ENCODE measurements at regions of chr5 and their contacts with region 1.

Region 1: DNA sequence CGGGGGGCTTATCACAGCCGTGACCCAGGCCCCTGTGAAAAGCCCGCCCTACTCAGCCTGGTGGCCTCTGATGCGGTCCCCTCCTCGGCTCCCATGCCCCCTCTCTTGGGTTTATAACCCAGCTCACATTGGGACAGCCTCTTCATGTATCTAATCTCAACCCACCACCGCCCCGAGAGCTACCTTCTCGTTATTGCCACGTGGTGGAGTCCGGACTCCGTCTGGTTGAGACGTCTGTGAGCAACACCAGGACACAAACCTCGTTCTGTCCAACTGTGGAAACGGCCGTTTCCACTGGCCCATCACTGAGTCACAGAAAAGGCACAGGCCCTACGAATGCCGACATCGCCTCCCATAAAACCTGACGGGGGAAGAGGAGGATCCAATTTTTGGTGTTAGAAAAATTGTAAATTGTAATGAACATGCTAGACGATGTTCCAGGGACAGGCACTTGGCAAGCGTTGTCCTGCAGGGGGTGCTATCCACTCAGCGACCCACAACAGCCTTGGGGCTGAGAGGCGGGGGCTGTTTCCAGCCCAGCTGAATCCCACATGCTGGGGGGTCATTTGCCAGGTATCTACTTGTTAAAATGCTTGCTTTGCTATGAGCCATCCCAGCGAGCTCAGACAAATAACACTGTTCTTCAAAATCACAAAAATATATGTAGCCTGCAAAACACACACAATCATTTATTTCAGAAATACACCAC is 37.3 kb upstream of the N4BP3 start:
- DNase-seq: peak; percentile 86

Region 2: GRCh38 chr5:177592010-177592834 is 483.8 kb before region 1 on chr5 and contains the start of gene TMED9:
- intact Hi-C with region 1: no loop called
- DNase-seq: peak; percentile 96
- total RNA-seq, gene TMED9: 94.9 TPM

Region 3: GRCh38 chr5:178146020-178146820 is 70.2 kb after region 1 on chr5:
- intact Hi-C with region 1: loop called (anchors 5 kb)
- DNase-seq: no peak

Region 4: DNA sequence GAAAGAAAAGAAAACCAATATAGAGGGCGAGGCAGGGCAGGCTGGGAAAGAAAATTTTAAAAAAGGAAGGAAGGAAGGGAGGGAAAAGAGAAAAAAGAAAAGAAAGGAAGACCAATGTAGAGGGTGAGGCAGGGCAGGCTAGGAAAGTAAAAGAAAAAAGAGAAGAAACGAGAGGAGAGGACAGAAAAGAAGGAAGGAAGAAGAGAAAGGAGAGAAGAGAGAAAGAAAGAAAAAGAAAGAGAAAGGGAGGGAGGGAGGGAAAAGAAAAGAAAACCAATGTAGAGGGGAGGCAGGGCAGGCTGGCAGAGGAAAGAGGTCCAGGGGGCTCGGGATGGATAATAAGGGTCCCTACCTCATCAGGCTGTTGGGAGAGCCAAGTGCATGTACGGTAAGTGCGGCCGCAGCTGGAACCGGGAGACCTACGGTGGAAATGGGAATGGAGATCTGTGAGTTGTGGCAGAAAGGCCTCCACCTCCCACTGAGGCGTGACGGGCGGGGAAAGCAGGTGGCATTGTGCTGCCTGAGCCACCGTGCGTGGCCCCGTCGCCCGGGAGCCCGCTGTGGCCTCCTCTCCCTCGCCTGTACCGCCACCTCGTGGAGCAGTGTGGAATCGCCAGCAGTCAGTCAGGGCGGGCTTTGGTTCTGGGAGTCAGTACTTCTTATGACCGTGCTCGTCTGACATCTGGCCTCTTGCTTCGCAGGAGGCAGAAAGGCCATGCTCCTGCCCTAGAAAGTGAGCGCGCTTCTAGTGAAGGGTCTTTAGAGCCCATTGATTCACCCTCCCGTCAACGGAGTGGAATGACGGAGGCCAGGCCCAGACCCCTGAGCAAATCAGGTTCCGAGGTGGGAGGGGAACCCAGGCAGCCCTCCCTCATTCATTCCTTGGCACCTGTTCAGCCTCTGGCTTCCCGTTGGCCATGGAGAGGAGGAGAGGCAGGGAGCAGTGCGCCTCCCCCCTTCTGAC is 88.1 kb after region 1 on chr5:
- intact Hi-C with region 1: loop called (anchors 1 kb)
- DNase-seq: peak; percentile 93

Region 5: DNA sequence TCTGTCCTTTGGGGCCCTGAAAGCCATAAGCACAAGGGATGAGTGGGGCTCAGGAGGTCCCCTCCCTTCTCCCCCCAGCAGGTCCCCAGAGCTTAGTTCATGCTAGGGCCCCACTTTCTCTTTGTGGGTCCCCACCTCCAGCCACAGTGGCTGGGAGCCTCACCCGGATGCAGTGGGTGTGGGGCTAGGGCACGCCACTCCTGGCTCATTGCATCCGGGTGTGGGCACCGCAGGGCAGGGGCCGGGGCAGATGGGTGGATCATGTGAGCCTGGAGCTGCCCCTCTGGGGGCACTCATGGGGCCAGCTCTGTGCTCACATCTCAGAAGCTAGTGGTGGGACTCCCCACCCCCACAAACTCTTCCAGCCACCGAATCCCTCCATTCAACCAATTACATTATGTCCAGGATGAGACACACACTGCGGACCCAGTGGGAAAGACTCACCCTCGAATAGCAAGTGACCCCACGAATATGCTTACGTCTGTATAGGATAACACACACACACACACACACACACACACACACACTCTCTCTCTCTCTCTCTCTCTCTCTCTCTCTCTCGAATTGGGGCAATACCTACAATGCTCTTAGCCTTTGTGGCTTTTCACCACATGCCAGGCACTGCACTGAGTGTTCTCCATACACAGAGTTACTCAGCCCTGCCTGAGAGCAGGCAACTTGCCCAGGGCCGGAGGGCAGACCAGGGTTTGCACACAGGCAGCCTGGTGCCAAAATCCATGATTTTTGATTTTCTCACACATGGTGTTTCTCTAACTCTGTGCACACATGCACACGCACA is 173.4 kb after region 1 on chr5:
- intact Hi-C with region 1: no loop called
- DNase-seq: no peak

Region 6: GRCh38 chr5:178527458-178528307 is 451.7 kb after region 1 on chr5:
- intact Hi-C with region 1: no loop called
- DNase-seq: peak; percentile 77